Activated T-helper 1 cell treated with anti-CD3 and anti-CD28 coated beads, Interleukin-12 subunit alpha, Interleukin-12 subunit beta, Interleukin-2, Interleukin-4 antibody, amounts not matched to agents 30 ng/mL and 10 ng/mL and 1 ng/mL, durations not matched to agents 14 hours and 24 hours and 36 hours (primary cell): ENCODE measurements at regions of chr4 and their contacts with region 1.

Region 1: DNA sequence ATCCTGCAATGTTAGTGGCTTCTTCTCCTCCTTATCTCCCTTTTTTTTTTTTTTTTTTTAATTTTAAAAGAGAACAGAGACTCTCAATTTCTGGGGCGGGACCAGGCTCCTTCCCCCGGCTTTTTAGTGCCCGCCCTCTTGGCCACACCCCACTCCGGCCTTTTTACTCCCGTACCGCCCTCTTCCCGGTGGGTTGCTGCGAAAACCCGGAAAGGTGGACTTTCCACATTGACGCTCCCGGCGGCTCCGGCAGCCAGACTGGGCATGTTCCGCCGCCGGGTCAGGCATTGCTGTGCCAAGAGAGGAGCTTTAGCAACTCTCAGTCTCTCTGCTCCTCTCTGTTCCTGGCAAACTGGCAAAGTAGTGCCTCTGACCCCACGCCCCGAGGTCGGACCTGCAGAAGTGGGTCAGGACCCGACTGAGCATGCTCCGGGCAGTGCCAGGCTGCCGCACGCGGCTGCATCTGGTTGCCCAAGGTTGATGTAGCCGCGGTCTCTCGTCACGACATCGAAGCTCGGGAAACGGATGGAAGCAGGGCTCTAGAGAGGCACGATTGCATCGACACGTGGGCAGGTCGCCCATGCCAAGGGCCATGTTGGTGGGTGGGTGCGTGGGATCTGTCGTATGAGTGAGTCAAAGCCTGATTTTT is 1.1 kb upstream of the MFAP3L start:
- DNase-seq: peak; percentile 82
- H3K4me3 Mint-ChIP-seq: peak overlapping the region; percentile 85
- H3K27ac Mint-ChIP-seq: peak overlapping the region; percentile 79
- H3K4me1 Mint-ChIP-seq: peaks cover 8% of the 10 kb centered on the region
- H3K27me3 Mint-ChIP-seq: peaks cover 53% of the 10 kb centered on the region

Region 2: GRCh38 chr4:169659716-169660670 is 367.3 kb before region 1 on chr4:
- intact Hi-C with region 1: loop called (anchors 1 kb)
- DNase-seq: peak; percentile 70
- H3K4me3 Mint-ChIP-seq: peak overlapping the region; percentile 86
- H3K27ac Mint-ChIP-seq: peak overlapping the region; percentile 97
- H3K4me1 Mint-ChIP-seq: peaks cover 26% of the 10 kb centered on the region
- H3K27me3 Mint-ChIP-seq: no peaks in the 10 kb centered on the region

Region 3: GRCh38 chr4:169757575-169758184 is 269.6 kb before region 1 on chr4 and contains the start of gene HPF1:
- intact Hi-C with region 1: loop called (anchors 1 kb)
- DNase-seq: peak; percentile 92
- H3K4me3 Mint-ChIP-seq: peak within 1 kb of the TSS; percentile 93
- H3K27ac Mint-ChIP-seq: peak within 1 kb of the TSS; percentile 69
- H3K4me1 Mint-ChIP-seq: peaks cover 32% of the 10 kb centered on the region
- H3K27me3 Mint-ChIP-seq: peaks cover 2% of the 10 kb centered on the region
- total RNA-seq, gene HPF1: 21.5 and 23.4 TPM in 2 replicates

Region 4: DNA sequence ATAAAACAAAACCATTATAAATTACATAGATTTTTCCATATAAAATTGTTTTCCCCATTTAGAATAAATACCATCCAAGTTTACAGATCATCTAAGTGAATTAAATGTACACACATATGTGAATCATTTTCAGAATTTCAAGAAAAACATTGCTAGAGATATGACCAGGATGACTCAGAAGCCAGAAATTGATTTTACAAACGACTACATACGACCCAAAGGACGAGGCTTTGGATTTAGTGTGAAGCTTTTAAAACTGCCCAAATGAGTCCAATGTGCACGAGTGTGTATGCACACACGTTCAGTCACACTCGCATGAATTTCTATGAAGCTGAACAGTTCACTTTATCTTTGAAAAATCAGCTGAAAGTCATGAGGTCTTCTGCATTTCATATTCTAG is 39.1 kb before region 1 on chr4:
- intact Hi-C with region 1: loop called (anchors 1 kb)
- DNase-seq: no peak
- H3K4me3 Mint-ChIP-seq: no peak overlapping the region
- H3K27ac Mint-ChIP-seq: no peak overlapping the region
- H3K4me1 Mint-ChIP-seq: peaks cover 16% of the 10 kb centered on the region
- H3K27me3 Mint-ChIP-seq: peaks cover 5% of the 10 kb centered on the region

Region 5: GRCh38 chr4:171049380-171049779 is 1022.1 kb after region 1 on chr4:
- intact Hi-C with region 1: no loop called
- DNase-seq: no peak
- H3K4me3 Mint-ChIP-seq: no peak overlapping the region
- H3K27ac Mint-ChIP-seq: no peak overlapping the region
- H3K4me1 Mint-ChIP-seq: no peaks in the 10 kb centered on the region
- H3K27me3 Mint-ChIP-seq: no peaks in the 10 kb centered on the region